Calu3 (cell line): ENCODE measurements at regions of chr3 and their contacts with region 1.

Region 1: GRCh38 chr3:88231207-88231606 is 81.4 kb downstream of the C3orf38 start:
- DNase-seq: peak; percentile 68
- H3K4me3 Mint-ChIP-seq: peak overlapping the region; percentile 12
- H3K27ac Mint-ChIP-seq: peak overlapping the region; percentile 91
- H3K4me1 Mint-ChIP-seq: peaks cover 12% of the 10 kb centered on the region
- H3K27me3 Mint-ChIP-seq: no peaks in the 10 kb centered on the region
- CTCF ChIP-seq: no peak

Region 2: GRCh38 chr3:88385090-88385489 is 153.9 kb after region 1 on chr3:
- CTCF ChIA-PET with region 1: no interaction called
- intact Hi-C with region 1: loop called (anchors 5 kb)
- DNase-seq: peak; percentile 21
- H3K4me3 Mint-ChIP-seq: peak overlapping the region; percentile 5
- H3K27ac Mint-ChIP-seq: peak overlapping the region; percentile 14
- H3K4me1 Mint-ChIP-seq: peaks cover 17% of the 10 kb centered on the region
- H3K27me3 Mint-ChIP-seq: no peaks in the 10 kb centered on the region
- CTCF ChIP-seq: no peak